Pancreas (tissue), 10 donors: ENCODE measurements at regions of chr1 and their contacts with region 1.

Region 1: DNA sequence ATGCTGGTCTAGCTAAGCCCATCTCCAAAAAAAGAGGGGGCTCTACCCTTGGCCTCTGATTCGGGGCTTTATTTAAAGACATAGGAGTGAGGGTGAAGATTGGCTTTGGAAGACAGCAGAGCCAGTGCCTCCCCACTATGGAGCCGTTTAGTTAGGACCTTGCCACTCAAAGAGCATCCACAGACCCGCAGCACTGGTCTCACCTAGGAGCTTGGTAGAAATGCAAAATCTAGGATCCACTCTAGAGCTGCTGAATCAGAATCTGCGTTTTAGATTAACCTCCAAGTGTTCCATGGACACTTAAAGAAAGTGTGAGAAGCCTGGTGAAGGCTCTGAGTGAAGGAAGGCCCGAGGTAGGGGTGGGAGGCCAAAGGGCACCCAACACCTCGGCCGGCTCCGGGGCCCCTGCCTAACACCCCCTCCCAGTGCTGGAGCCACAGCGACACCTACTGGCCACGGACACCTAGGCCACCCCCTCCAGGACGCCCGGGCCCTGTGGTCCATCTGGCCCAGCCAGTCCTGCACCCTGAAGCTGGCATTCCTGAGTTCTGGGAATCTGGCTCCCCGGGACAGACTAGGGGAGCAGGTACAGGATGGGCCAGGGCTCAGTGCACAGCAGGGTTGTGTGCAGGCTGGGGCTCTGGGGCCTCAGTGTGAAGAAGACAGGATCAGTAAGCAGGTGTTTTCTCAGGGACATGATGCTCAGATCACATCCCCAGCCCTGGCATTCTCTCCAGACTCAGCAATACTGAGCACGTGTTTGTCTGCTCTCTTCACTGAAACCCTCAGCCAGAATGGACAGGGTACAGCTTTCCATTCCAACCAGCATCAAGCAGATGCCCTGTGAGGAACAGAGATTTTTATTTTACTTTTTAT is 79.2 kb downstream of the TMEM53 start:
- DNase-seq: peak; percentile 62 to 98 (median 84)
- ATAC-seq: peak; percentile 95 to 100 (median 97)
- H3K4me3 ChIP-seq: no peak overlapping the region
- H3K27ac ChIP-seq: no peak overlapping the region
- H3K4me1 ChIP-seq: no peaks in the 10 kb centered on the region
- H3K27me3 ChIP-seq: peaks cover 0 to 3% (median 0%) of the 10 kb centered on the region in 4 donors
- CTCF ChIP-seq: peak; percentile 94 to 98 (median 96)

Region 2: GRCh38 chr1:44213222-44214112 is 381.6 kb before region 1 on chr1 and contains the start of gene DMAP1:
- intact Hi-C with region 1: loop called in 1 of 3 experiments (anchors 10 kb)
- DNase-seq: peak; percentile 76 to 95 (median 86)
- ATAC-seq: peak; percentile 91 to 96 (median 94)
- H3K4me3 ChIP-seq: peak within 1 kb of the TSS; percentile 70 to 93 (median 82)
- H3K27ac ChIP-seq: peak within 1 kb of the TSS in 3 of 4 donors; percentile 42 to 60 (median 57)
- H3K4me1 ChIP-seq: peaks cover 6 to 19% (median 6%) of the 10 kb centered on the region in 3 donors
- H3K27me3 ChIP-seq: no peaks in the 10 kb centered on the region
- CTCF ChIP-seq: no peak
- total RNA-seq, gene DMAP1: 18.1 to 30.4 (median 25.8) TPM

Region 3: DNA sequence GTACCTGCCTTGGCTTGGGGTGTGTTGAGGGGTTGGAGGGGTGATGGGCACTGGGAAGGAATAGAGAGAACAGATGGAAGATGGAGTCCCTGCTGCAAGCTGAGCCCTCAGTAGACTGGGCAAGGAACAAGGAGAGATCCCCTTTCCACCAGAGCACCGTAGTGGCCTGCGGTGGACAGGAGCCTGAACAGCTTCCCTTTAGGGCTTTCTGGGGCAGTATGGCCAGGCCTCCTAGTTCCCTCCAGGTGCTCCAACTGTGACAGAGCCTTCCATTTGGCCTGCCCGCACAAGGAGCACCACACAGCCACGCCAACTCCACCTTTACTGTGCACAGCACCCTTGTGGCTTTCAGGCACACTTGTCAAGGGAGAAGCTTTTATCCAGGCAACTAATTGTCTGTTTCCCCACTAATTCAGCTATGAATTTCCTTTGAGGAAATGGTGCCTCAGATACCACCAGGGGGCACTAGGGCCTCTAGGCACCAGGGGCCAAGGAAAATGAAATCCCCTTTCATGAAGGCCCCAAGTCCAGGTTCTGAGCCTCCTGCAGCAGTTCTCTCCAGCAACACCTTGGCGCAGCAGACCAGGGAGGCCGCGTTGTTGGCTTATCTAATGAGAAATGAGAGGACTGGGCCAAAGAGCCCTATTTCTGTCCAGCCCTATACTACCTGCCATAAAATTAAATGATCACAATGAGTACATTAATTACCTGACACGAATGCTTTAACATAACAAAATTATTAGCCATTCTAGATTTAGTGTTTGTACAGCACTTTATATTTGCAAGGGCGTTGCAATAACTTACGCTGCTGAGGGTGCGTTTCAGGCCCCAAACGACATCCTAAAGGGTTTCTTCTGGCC is 217.0 kb before region 1 on chr1:
- intact Hi-C with region 1: loop called in 2 of 3 experiments (anchors 5 to 10 kb)
- DNase-seq: peak in 4 of 6 donors; percentile 11 to 59 (median 38)
- ATAC-seq: peak in 3 of 4 donors; percentile 70 to 82 (median 74)
- H3K4me3 ChIP-seq: no peak overlapping the region
- H3K27ac ChIP-seq: no peak overlapping the region
- H3K4me1 ChIP-seq: no peaks in the 10 kb centered on the region
- H3K27me3 ChIP-seq: no peaks in the 10 kb centered on the region
- CTCF ChIP-seq: peak; percentile 43 to 57 (median 48)

Region 4: DNA sequence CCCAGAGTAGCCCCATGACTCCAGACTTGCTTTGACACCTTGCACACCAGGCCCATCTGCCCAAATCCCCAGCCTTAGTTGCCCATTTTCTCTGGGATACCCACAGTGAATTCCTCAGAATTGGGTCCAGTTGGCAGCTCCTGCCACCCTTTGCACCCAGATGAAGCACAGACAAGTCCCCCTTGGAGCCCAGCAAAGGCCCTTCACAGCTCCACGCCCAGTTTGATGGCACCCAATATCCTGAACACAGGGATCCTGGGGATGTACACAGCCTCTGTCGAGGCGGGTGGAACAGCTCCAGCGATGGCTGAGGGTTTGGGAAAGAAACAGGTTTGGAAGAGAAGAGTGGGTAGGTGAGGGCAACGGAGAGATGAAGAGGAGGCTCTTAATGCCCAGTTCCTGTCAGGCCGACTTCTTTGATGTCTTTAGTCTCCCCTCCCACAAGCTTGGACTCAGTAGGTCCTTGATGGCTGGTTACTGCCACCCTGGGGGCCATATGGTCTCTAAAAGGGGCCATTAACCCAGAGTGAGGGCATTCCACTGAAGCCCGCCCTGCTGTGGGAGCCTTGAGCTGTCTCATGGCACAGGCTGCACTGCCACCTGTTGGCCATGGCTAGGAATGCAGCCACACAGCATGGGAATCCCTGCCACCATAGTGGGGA is 57.5 kb after region 1 on chr1:
- intact Hi-C with region 1: loop called in 1 of 3 experiments (anchors 10 kb)
- DNase-seq: peak; percentile 58 to 94 (median 82)
- ATAC-seq: peak; percentile 83 to 97 (median 93)
- H3K4me3 ChIP-seq: no peak overlapping the region
- H3K27ac ChIP-seq: no peak overlapping the region
- H3K4me1 ChIP-seq: no peaks in the 10 kb centered on the region
- H3K27me3 ChIP-seq: no peaks in the 10 kb centered on the region
- CTCF ChIP-seq: peak; percentile 92 to 94 (median 94)

Region 5: GRCh38 chr1:44807262-44808062 is 212.4 kb after region 1 on chr1 and contains the start of gene DYNLT4:
- intact Hi-C with region 1: no loop called
- DNase-seq: peak; percentile 90 to 98 (median 97)
- ATAC-seq: peak; percentile 84 to 89 (median 87)
- H3K4me3 ChIP-seq: peak within 1 kb of the TSS in 1 of 4 donors; percentile 13
- H3K27ac ChIP-seq: peak within 1 kb of the TSS; percentile 94 to 99 (median 98)
- H3K4me1 ChIP-seq: peaks cover 40 to 50% (median 41%) of the 10 kb centered on the region in 3 donors
- H3K27me3 ChIP-seq: no peaks in the 10 kb centered on the region
- CTCF ChIP-seq: no peak
- total RNA-seq, gene DYNLT4: 0.28 to 1.8 (median 0.38) TPM